Mammary epithelial cell (primary cell): ENCODE measurements at regions of chr12 and their contacts with region 1.

Region 1: GRCh38 chr12:70733385-70733784 is 96.2 kb upstream of the PTPRB start:
- DNase-seq: peak; percentile 60
- H3K4me3 ChIP-seq: no peak overlapping the region
- H3K27ac ChIP-seq: no peak overlapping the region
- H3K4me1 ChIP-seq: no peaks in the 10 kb centered on the region
- H3K27me3 ChIP-seq: no peaks in the 10 kb centered on the region
- CTCF ChIP-seq: peak; percentile 63 to 74

Region 2: DNA sequence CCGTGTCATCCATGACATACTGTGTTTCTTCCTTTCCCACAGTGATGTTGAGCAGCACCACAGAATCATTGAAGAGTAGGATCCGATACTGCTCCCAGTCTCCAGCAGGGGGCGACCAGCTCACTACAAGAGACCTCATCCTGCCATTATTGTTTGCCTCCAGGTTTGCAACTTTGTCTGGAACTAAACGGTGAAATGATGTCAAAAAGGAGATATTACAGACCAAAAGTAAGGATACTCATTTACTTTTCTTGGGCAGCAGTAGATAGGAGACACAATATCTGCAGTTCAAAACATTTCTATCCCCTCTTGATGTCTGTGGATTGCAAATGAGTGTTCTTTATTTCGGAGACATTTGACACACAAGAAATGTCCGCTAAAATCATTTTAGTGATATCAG is 143.3 kb before region 1 on chr12:
- CTCF ChIA-PET with region 1: no interaction called
- dilution Hi-C with region 1: no loop called
- in situ Hi-C with region 1: loop called in 1 of 2 experiments (anchors 5 kb)
- intact Hi-C with region 1: loop called (anchors 2 kb)
- DNase-seq: peak; percentile 49
- H3K4me3 ChIP-seq: no peak overlapping the region
- H3K27ac ChIP-seq: no peak overlapping the region
- H3K4me1 ChIP-seq: no peaks in the 10 kb centered on the region
- H3K27me3 ChIP-seq: no peaks in the 10 kb centered on the region
- CTCF ChIP-seq: peak; percentile 88 to 95

Region 3: GRCh38 chr12:70849265-70849960 is 116.0 kb after region 1 on chr12:
- CTCF ChIA-PET with region 1: no interaction called
- dilution Hi-C with region 1: no loop called
- in situ Hi-C with region 1: loop called (anchors 10 kb)
- intact Hi-C with region 1: loop called (anchors 1 kb)
- DNase-seq: peak; percentile 8
- H3K4me3 ChIP-seq: no peak overlapping the region
- H3K27ac ChIP-seq: no peak overlapping the region
- H3K4me1 ChIP-seq: no peaks in the 10 kb centered on the region
- H3K27me3 ChIP-seq: peaks cover 2% of the 10 kb centered on the region
- CTCF ChIP-seq: peak; percentile 25 to 62

Region 4: GRCh38 chr12:70908978-70909377 is 175.6 kb after region 1 on chr12:
- CTCF ChIA-PET with region 1: interaction called, 12 read pairs
- dilution Hi-C with region 1: no loop called
- in situ Hi-C with region 1: no loop called
- intact Hi-C with region 1: no loop called
- DNase-seq: no peak
- H3K4me3 ChIP-seq: no peak overlapping the region
- H3K27ac ChIP-seq: no peak overlapping the region
- H3K4me1 ChIP-seq: no peaks in the 10 kb centered on the region
- H3K27me3 ChIP-seq: no peaks in the 10 kb centered on the region
- CTCF ChIP-seq: no peak

Region 5: GRCh38 chr12:71014180-71014785 is 280.9 kb after region 1 on chr12:
- CTCF ChIA-PET with region 1: no interaction called
- dilution Hi-C with region 1: no loop called
- in situ Hi-C with region 1: loop called (anchors 10 to 25 kb)
- intact Hi-C with region 1: loop called (anchors 1 kb)
- DNase-seq: peak; percentile 32
- H3K4me3 ChIP-seq: no peak overlapping the region
- H3K27ac ChIP-seq: no peak overlapping the region
- H3K4me1 ChIP-seq: no peaks in the 10 kb centered on the region
- H3K27me3 ChIP-seq: no peaks in the 10 kb centered on the region
- CTCF ChIP-seq: peak; percentile 46 to 65

Region 6: GRCh38 chr12:71029302-71029701 is 295.9 kb after region 1 on chr12:
- CTCF ChIA-PET with region 1: interaction called, 13 read pairs
- dilution Hi-C with region 1: no loop called
- in situ Hi-C with region 1: loop called in 1 of 2 experiments (anchors 25 kb)
- intact Hi-C with region 1: no loop called
- DNase-seq: no peak
- H3K4me3 ChIP-seq: no peak overlapping the region
- H3K27ac ChIP-seq: no peak overlapping the region
- H3K4me1 ChIP-seq: no peaks in the 10 kb centered on the region
- H3K27me3 ChIP-seq: peaks cover 2% of the 10 kb centered on the region
- CTCF ChIP-seq: no peak

Region 7: GRCh38 chr12:71392521-71393145 is 659.2 kb after region 1 on chr12:
- CTCF ChIA-PET with region 1: no interaction called
- dilution Hi-C with region 1: no loop called
- in situ Hi-C with region 1: no loop called
- intact Hi-C with region 1: loop called (anchors 5 kb)
- DNase-seq: peak; percentile 64
- H3K4me3 ChIP-seq: no peak overlapping the region
- H3K27ac ChIP-seq: no peak overlapping the region
- H3K4me1 ChIP-seq: no peaks in the 10 kb centered on the region
- H3K27me3 ChIP-seq: no peaks in the 10 kb centered on the region
- CTCF ChIP-seq: peak; percentile 91 to 97